ENCODE measurements at regions of chr9 and their contacts with region 1.

Region 1: DNA sequence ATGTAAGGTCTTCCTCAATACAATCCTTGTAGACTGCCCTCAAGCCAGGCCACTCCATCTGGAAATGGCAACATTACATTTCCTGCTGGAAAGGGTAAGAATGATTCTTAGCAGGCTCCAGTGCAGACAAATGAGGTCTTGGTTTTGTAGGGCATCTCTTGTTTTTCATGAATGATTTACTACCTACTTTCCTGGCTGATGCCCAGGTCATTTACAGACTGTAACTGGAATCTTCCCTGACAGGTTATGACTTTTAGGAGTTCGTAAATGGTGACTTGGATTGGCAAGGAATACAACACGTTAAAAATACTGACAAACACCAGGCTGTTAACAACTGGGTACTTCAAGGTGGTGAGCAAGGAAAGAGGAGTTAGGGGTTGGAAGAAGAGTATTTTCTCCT is 510.5 kb upstream of the TNC start:
- DNase-seq: no peak
- H3K4me3 ChIP-seq: no peak overlapping the region
- H3K27ac ChIP-seq: no peak overlapping the region
- H3K4me1 ChIP-seq: no peaks in the 10 kb centered on the region
- H3K27me3 ChIP-seq: no peaks in the 10 kb centered on the region
- CTCF ChIP-seq: no peak

Region 2: DNA sequence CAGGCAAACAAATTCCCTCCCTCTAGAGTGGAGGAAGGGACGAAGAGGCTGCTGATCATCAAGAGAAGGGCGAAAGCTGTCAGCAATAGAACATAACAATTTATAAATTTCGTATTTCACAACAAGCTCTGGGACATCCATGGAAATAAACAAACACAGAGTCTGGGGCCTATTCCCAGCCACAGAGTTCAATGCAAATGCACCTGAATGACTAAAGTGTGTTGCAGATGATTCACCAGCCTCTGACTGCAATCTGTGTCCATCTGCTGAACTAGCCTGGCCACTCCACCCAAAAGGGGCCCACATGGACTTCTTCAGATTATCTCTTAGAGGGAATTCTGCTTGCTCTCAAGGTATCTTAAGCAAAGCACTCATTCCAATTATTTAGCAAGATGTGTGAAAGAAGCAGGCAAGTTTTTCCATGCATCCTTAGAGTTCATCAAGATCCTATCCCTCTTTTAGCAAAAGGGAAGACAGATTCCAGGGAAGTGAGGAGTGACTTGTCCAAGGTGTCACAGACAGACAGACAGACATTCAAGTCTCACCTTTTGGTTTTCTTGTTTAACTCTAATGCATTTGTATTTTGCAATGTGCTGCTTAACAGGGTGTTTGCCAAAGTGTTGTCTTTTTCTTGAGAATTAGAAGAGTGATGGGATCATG is 217.4 kb after region 1 on chr9:
- CTCF ChIA-PET with region 1: interaction called, 10 read pairs
- POLR2A ChIA-PET with region 1: no interaction called
- intact Hi-C with region 1: no loop called
- DNase-seq: peak; percentile 35 to 70
- H3K4me3 ChIP-seq: no peak overlapping the region
- H3K27ac ChIP-seq: no peak overlapping the region; the same call in 1 of the 2 replicates
- H3K4me1 ChIP-seq: peaks cover 14% of the 10 kb centered on the region; the same call in 1 of the 2 replicates
- H3K27me3 ChIP-seq: no peaks in the 10 kb centered on the region
- CTCF ChIP-seq: no peak

Measured in PC-9 (cell line).